Calu3 (cell line): ENCODE measurements at regions of chr18 and their contacts with region 1.

Region 1: DNA sequence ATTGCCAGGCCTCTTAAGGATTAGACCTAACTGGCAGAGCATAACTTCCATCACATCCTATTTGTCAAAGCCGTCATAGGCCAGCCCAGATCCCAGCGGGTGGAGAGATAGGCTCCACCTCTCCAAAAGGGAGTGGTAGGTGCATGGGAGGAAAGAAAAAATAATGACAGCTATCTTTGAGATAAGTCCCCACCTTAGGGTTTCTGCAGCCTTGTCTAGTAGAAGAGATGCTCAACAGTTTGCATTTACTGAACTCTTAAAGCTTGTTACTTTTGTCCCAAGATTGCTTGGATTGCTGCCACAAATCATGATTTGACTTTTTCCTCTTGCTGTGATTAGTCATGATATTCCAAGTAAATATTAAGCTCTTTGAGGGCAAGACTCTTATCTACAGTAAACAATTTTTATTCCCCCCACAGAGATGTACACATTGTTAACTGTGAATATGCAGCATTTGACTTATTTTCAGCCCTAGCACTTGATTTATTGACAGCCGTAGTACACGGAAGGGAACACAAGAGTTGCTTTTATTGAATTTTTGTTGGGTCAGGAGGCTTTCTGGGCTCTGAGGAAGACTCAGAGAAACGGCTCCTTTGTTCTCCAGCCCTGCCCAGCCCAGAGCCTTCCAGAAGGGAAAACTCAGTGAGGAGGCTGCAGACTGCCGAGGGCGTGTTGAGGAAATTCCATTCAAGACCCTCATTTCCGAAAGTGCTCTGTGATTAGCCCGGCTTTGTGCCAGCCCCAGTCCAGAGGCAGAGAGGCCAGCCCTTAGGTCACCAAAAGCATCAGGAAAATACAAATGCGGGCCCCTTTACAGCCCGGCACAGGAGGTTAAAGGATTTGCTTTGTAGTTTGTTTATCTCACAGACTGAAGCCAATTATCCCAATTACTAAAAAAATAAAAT is 75.5 kb upstream of the ZNF532 start:
- DNase-seq: peak; percentile 87
- H3K4me3 Mint-ChIP-seq: no peak overlapping the region
- H3K27ac Mint-ChIP-seq: peak overlapping the region; percentile 98
- H3K4me1 Mint-ChIP-seq: peaks cover 53% of the 10 kb centered on the region
- H3K27me3 Mint-ChIP-seq: no peaks in the 10 kb centered on the region
- CTCF ChIP-seq: no peak

Region 2: DNA sequence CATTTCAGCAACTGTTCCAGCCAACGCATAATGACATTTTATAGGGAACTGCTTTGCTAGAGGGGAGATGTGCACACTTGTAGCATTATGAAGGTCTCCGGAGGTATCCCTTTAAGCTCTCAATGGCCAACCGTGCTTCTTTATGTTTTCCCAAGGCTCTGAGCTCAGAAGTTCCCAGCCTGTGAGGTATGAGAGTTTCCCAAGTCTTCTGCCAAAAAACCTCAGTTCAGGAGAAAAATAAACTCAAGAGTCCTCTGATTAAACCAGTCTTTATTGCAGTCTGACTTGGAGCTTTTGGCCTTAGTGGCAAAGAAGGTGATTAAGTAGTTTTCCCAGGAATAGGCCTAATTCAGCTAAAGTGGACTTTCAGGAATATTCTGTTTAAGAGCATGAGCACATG is 40.0 kb after region 1 on chr18:
- CTCF ChIA-PET with region 1: interaction called, 7 read pairs
- intact Hi-C with region 1: loop called (anchors 1 kb)
- DNase-seq: no peak
- H3K4me3 Mint-ChIP-seq: no peak overlapping the region
- H3K27ac Mint-ChIP-seq: no peak overlapping the region
- H3K4me1 Mint-ChIP-seq: peaks cover 7% of the 10 kb centered on the region
- H3K27me3 Mint-ChIP-seq: no peaks in the 10 kb centered on the region
- CTCF ChIP-seq: no peak

Region 3: GRCh38 chr18:58850784-58851469 is 61.7 kb after region 1 on chr18:
- CTCF ChIA-PET with region 1: interaction called, 6 read pairs
- intact Hi-C with region 1: loop called (anchors 1 kb)
- DNase-seq: no peak
- H3K4me3 Mint-ChIP-seq: peak overlapping the region; percentile 37
- H3K27ac Mint-ChIP-seq: peak overlapping the region; percentile 95
- H3K4me1 Mint-ChIP-seq: peaks cover 67% of the 10 kb centered on the region
- H3K27me3 Mint-ChIP-seq: no peaks in the 10 kb centered on the region
- CTCF ChIP-seq: no peak

Region 4: GRCh38 chr18:58863539-58864145 is 74.4 kb after region 1 on chr18:
- CTCF ChIA-PET with region 1: interaction called, 7 read pairs
- intact Hi-C with region 1: loop called (anchors 1 kb)
- DNase-seq: peak; percentile 61
- H3K4me3 Mint-ChIP-seq: peak overlapping the region; percentile 73
- H3K27ac Mint-ChIP-seq: peak overlapping the region; percentile 98
- H3K4me1 Mint-ChIP-seq: peaks cover 76% of the 10 kb centered on the region
- H3K27me3 Mint-ChIP-seq: no peaks in the 10 kb centered on the region
- CTCF ChIP-seq: no peak